ENCODE measurements at regions of chr1 and their contacts with region 1.

Region 1: GRCh38 chr1:203267347-203267846 is 37.9 kb upstream of the BTG2 start:
- DNase-seq: peak; percentile 90
- ATAC-seq: peak; percentile 70
- H3K4me3 Mint-ChIP-seq: peak overlapping the region; percentile 83
- H3K27ac Mint-ChIP-seq: peak overlapping the region; percentile 81
- H3K4me1 Mint-ChIP-seq: peaks cover 22% of the 10 kb centered on the region
- H3K27me3 Mint-ChIP-seq: peaks cover 6% of the 10 kb centered on the region

Region 2: DNA sequence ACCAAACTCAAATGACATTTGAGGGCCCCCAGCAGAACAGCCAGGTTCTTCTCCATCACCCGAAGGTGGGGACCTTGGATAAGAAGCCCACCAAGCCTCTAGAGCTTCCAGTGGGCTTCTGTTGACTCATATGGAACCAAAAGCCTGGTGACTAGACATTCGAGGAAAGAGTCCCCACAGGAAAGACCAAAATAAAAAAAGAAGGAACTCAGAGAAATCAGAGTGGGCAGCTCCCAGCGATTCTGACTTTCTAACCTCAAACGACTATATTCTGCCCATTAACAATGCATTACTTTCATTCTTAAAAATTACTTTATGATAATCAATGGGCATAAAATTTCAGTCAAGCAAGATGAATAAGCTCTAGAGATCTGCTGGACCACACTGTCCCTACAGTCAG is 28.3 kb before region 1 on chr1:
- CTCF ChIA-PET with region 1: no interaction called
- DNase-seq: no peak
- ATAC-seq: no peak
- H3K4me3 Mint-ChIP-seq: no peak overlapping the region
- H3K27ac Mint-ChIP-seq: no peak overlapping the region
- H3K4me1 Mint-ChIP-seq: no peaks in the 10 kb centered on the region
- H3K27me3 Mint-ChIP-seq: peaks cover 50% of the 10 kb centered on the region

Region 3: DNA sequence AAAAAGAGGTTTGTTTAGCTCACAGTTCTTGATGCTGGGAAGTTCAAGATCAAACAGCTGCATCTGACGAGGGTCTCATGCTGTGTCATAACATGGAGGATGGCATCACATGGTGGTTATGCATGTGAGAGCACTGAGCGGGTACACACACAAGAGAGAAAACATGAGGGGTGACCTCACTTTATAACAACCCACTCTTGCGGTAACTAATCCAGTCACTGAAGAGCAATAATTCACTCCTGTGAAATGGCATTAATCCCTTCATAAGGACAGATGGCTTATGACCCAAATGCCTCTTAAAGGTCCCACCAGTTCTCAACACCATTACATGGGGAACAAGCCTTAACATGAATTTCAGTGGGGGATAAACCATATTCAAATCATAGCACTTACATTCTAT is 14.7 kb before region 1 on chr1:
- CTCF ChIA-PET with region 1: interaction called, 12 read pairs
- DNase-seq: no peak
- ATAC-seq: no peak
- H3K4me3 Mint-ChIP-seq: no peak overlapping the region
- H3K27ac Mint-ChIP-seq: no peak overlapping the region
- H3K4me1 Mint-ChIP-seq: no peaks in the 10 kb centered on the region
- H3K27me3 Mint-ChIP-seq: peaks cover 66% of the 10 kb centered on the region

Region 4: GRCh38 chr1:203351037-203352013 is 83.9 kb after region 1 on chr1 and contains the start of gene FMOD:
- CTCF ChIA-PET with region 1: interaction called, 806 read pairs
- DNase-seq: no peak
- ATAC-seq: no peak
- H3K4me3 Mint-ChIP-seq: no peak within 1 kb of the TSS
- H3K27ac Mint-ChIP-seq: no peak within 1 kb of the TSS
- H3K4me1 Mint-ChIP-seq: peaks cover 2% of the 10 kb centered on the region
- H3K27me3 Mint-ChIP-seq: peaks cover 44% of the 10 kb centered on the region
- total RNA-seq, gene FMOD: 0.19 TPM in 1 of 2 experiments, not detected in the other

Region 5: GRCh38 chr1:203493901-203494300 is 226.5 kb after region 1 on chr1 and contains the start of gene OPTC:
- CTCF ChIA-PET with region 1: interaction called, 194 read pairs
- DNase-seq: no peak
- ATAC-seq: no peak
- H3K4me3 Mint-ChIP-seq: no peak within 1 kb of the TSS
- H3K27ac Mint-ChIP-seq: no peak within 1 kb of the TSS
- H3K4me1 Mint-ChIP-seq: peaks cover under 1% of the 10 kb centered on the region
- H3K27me3 Mint-ChIP-seq: peaks cover 10% of the 10 kb centered on the region
- total RNA-seq, gene OPTC: not detected

Measured in activated CD8-positive, alpha-beta memory T cell treated with anti-CD3 and anti-CD28 coated beads, Interleukin-2, amount 10 ng/mL, durations not matched to agents 7 days and 5 days (primary cell).